CD8-positive, alpha-beta memory T cell (primary cell): ENCODE measurements at regions of chr2 and their contacts with region 1.

Region 1: DNA sequence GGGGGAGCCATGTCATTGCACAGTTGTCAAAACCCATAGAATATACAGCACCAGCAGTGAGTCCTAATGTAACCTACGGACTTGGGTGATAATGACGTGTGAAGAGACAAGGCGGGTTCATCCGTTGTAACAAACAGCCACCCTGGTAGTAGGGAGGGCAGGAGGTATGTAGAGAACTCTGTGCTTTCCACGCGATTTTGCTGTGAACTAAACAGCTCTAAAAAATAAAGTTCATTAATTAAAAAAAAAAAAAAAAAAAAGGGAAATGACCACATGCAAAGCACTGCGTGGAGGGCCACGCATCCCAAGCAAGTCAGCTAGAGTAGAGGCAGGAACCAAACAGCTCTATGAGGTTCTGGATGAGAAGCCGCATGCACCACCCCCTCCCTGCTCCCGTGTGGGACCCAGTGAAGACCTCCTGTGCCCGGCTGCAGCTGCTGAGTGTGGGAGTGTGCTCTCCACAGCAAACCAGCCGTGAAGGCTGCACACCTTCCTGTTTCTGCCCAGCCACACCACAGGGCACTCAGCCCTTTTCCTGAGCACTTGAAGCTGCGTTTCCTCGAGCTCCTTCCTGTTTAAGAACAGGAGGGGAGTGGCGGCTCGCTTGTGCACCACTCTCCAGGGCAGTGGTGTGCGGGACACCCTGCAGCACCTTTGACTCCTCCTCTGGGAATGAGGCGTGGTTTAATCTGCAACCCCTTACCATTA is 65.6 kb downstream of the ODC1 start:
- DNase-seq: peak; percentile 22 to 73 (median 72)
- H3K4me3 ChIP-seq: peak overlapping the region; percentile 75
- H3K4me3 Mint-ChIP-seq: peak overlapping the region; percentile 65 to 88 (median 73)
- H3K27ac ChIP-seq: peak overlapping the region; percentile 0
- H3K27ac Mint-ChIP-seq: peak overlapping the region; percentile 79 to 97 (median 85)
- H3K4me1 ChIP-seq: peaks cover 90% of the 10 kb centered on the region
- H3K4me1 Mint-ChIP-seq: peaks cover 81 to 99% (median 81%) of the 10 kb centered on the region in 3 donors
- H3K27me3 ChIP-seq: no peaks in the 10 kb centered on the region
- H3K27me3 Mint-ChIP-seq: no peaks in the 10 kb centered on the region

Region 2: DNA sequence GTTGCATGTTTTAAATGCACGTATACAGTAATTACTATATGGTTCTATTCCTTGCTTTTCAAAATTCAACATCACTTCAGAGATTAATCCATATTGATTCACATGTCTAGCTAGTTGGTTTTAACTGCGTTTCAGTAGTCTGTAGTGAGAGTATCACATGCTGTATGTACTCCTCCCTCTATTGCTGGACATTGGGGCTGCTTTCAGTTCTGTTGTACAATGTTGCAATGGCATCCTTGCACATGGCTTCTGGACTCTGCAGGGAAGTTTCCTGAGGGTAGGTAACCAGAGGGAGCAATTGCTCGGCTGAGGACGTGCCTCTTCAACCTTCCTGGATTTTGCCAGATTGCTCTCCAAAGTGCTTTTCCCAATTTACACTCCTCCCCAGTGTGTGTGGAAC is 90.5 kb before region 1 on chr2:
- CTCF ChIA-PET with region 1: no interaction called
- POLR2A ChIA-PET with region 1: no interaction called
- DNase-seq: no peak
- H3K4me3 ChIP-seq: no peak overlapping the region
- H3K4me3 Mint-ChIP-seq: no peak overlapping the region
- H3K27ac ChIP-seq: no peak overlapping the region
- H3K27ac Mint-ChIP-seq: no peak overlapping the region
- H3K4me1 ChIP-seq: no peaks in the 10 kb centered on the region
- H3K4me1 Mint-ChIP-seq: peaks cover 0 to 4% (median 4%) of the 10 kb centered on the region in 3 donors
- H3K27me3 ChIP-seq: no peaks in the 10 kb centered on the region
- H3K27me3 Mint-ChIP-seq: no peaks in the 10 kb centered on the region

Region 3: GRCh38 chr2:10302479-10303180 is 79.9 kb before region 1 on chr2 and contains the start of gene HPCAL1:
- CTCF ChIA-PET with region 1: interaction called, 13 read pairs
- POLR2A ChIA-PET with region 1: interaction called, 8 read pairs
- DNase-seq: peak; percentile 80 to 86 (median 83)
- H3K4me3 ChIP-seq: peak within 1 kb of the TSS; percentile 76
- H3K4me3 Mint-ChIP-seq: peak within 1 kb of the TSS; percentile 97 to 99 (median 97)
- H3K27ac ChIP-seq: peak within 1 kb of the TSS; percentile 54
- H3K27ac Mint-ChIP-seq: peak within 1 kb of the TSS; percentile 76 to 97 (median 94)
- H3K4me1 ChIP-seq: peaks cover 60% of the 10 kb centered on the region
- H3K4me1 Mint-ChIP-seq: peaks cover 63 to 78% (median 76%) of the 10 kb centered on the region in 3 donors
- H3K27me3 ChIP-seq: no peaks in the 10 kb centered on the region
- H3K27me3 Mint-ChIP-seq: peaks cover 0 to 2% of the 10 kb centered on the region in 2 donors
- total RNA-seq, gene HPCAL1: 44.1 to 47.6 TPM

Region 4: GRCh38 chr2:10363861-10364610 is 18.5 kb before region 1 on chr2:
- CTCF ChIA-PET with region 1: interaction called, 3 read pairs
- POLR2A ChIA-PET with region 1: interaction called, 12 read pairs
- DNase-seq: no peak
- H3K4me3 ChIP-seq: no peak overlapping the region
- H3K4me3 Mint-ChIP-seq: no peak overlapping the region
- H3K27ac ChIP-seq: no peak overlapping the region
- H3K27ac Mint-ChIP-seq: peak overlapping the region in 2 of 8 donors; percentile 36 to 63
- H3K4me1 ChIP-seq: peaks cover 3% of the 10 kb centered on the region
- H3K4me1 Mint-ChIP-seq: peaks cover 24 to 72% (median 36%) of the 10 kb centered on the region in 3 donors
- H3K27me3 ChIP-seq: no peaks in the 10 kb centered on the region
- H3K27me3 Mint-ChIP-seq: peaks cover 0 to 2% of the 10 kb centered on the region in 2 donors